ENCODE measurements at regions of chr14 and their contacts with region 1.

Region 1: GRCh38 chr14:73136387-73137225 is at the start of gene PSEN1:
- DNase-seq: peak; percentile 94
- H3K4me3 Mint-ChIP-seq: peak within 1 kb of the TSS; percentile 74
- H3K27ac Mint-ChIP-seq: peak within 1 kb of the TSS; percentile 99
- H3K4me1 Mint-ChIP-seq: peaks cover 9% of the 10 kb centered on the region
- H3K27me3 Mint-ChIP-seq: no peaks in the 10 kb centered on the region
- CTCF ChIP-seq: no peak
- total RNA-seq, gene PSEN1: 55.1 and 64.5 TPM in 2 replicates

Region 2: DNA sequence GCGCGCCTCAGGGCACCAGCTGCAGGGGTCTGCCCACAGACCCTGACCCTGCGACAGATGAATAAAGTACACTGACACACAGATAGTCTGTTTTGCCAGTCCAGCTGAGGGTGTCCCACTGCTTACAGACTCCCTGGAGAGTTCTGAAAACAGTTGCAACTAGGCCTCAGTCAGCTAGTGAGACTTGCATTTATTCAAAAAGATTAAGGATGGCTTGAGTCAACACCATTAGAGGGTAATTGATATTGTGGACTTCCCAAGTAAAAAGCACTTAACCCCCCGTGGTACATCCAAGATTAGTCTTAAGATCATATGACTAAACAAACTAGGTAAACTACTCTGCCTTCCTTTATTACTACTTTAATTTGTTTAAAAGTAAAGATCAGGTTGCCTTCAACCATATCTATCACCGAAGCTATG is 11.4 kb before region 1 on chr14:
- CTCF ChIA-PET with region 1: interaction called, 5 read pairs
- POLR2A ChIA-PET with region 1: interaction called, 27 read pairs
- intact Hi-C with region 1: no loop called
- DNase-seq: no peak
- H3K4me3 Mint-ChIP-seq: no peak overlapping the region
- H3K27ac Mint-ChIP-seq: no peak overlapping the region
- H3K4me1 Mint-ChIP-seq: no peaks in the 10 kb centered on the region
- H3K27me3 Mint-ChIP-seq: no peaks in the 10 kb centered on the region
- CTCF ChIP-seq: no peak

Region 3: GRCh38 chr14:73231981-73232851 is 95.6 kb after region 1 on chr14:
- CTCF ChIA-PET with region 1: no interaction called
- POLR2A ChIA-PET with region 1: no interaction called
- intact Hi-C with region 1: no loop called
- DNase-seq: no peak
- H3K4me3 Mint-ChIP-seq: no peak overlapping the region
- H3K27ac Mint-ChIP-seq: no peak overlapping the region
- H3K4me1 Mint-ChIP-seq: peaks cover 28% of the 10 kb centered on the region
- H3K27me3 Mint-ChIP-seq: peaks cover 52% of the 10 kb centered on the region
- CTCF ChIP-seq: no peak

Measured in MCF 10A (cell line).